ENCODE measurements at regions of chr10 and their contacts with region 1.

Region 1: GRCh38 chr10:122703439-122704118 is 3.9 kb upstream of the C10orf120 start:
- DNase-seq: peak; percentile 68
- ATAC-seq: peak; percentile 94
- H3K4me3 ChIP-seq: no peak overlapping the region
- H3K27ac ChIP-seq: no peak overlapping the region
- H3K4me1 ChIP-seq: no peaks in the 10 kb centered on the region
- H3K27me3 ChIP-seq: no peaks in the 10 kb centered on the region
- CTCF ChIP-seq: peak; percentile 87

Region 2: GRCh38 chr10:122525788-122526187 is 177.8 kb before region 1 on chr10:
- CTCF ChIA-PET with region 1: no interaction called
- POLR2A ChIA-PET with region 1: no interaction called
- intact Hi-C with region 1: loop called (anchors 2 kb)
- DNase-seq: peak; percentile 33
- ATAC-seq: peak; percentile 46
- H3K4me3 ChIP-seq: no peak overlapping the region
- H3K27ac ChIP-seq: no peak overlapping the region
- H3K4me1 ChIP-seq: no peaks in the 10 kb centered on the region
- H3K27me3 ChIP-seq: no peaks in the 10 kb centered on the region
- CTCF ChIP-seq: peak; percentile 52; the same call in 1 of the 2 replicates

Region 3: GRCh38 chr10:122648599-122649428 is 54.8 kb before region 1 on chr10:
- CTCF ChIA-PET with region 1: interaction called, 3 read pairs
- POLR2A ChIA-PET with region 1: no interaction called
- intact Hi-C with region 1: loop called (anchors 5 kb)
- DNase-seq: peak; percentile 50
- ATAC-seq: peak; percentile 51
- H3K4me3 ChIP-seq: no peak overlapping the region
- H3K27ac ChIP-seq: no peak overlapping the region
- H3K4me1 ChIP-seq: no peaks in the 10 kb centered on the region
- H3K27me3 ChIP-seq: peaks cover 19% of the 10 kb centered on the region
- CTCF ChIP-seq: peak; percentile 68

Measured in PC-3 (cell line).